CD4-positive, alpha-beta memory T cell (primary cell): ENCODE measurements at regions of chr12 and their contacts with region 1.

Region 1: GRCh38 chr12:92363295-92364146 is 217.9 kb upstream of the BTG1 start:
- DNase-seq: peak; percentile 40 to 76 (median 49)
- H3K4me3 ChIP-seq: peak overlapping the region; percentile 14 to 34
- H3K4me3 Mint-ChIP-seq: peak overlapping the region; percentile 44 to 92 (median 78)
- H3K27ac ChIP-seq: peak overlapping the region; percentile 41
- H3K27ac Mint-ChIP-seq: peak overlapping the region; percentile 85 to 97 (median 94)
- H3K4me1 ChIP-seq: peaks cover 66% of the 10 kb centered on the region
- H3K4me1 Mint-ChIP-seq: peaks cover 42 to 75% (median 60%) of the 10 kb centered on the region in 4 donors
- H3K27me3 ChIP-seq: no peaks in the 10 kb centered on the region
- H3K27me3 Mint-ChIP-seq: no peaks in the 10 kb centered on the region

Region 2: DNA sequence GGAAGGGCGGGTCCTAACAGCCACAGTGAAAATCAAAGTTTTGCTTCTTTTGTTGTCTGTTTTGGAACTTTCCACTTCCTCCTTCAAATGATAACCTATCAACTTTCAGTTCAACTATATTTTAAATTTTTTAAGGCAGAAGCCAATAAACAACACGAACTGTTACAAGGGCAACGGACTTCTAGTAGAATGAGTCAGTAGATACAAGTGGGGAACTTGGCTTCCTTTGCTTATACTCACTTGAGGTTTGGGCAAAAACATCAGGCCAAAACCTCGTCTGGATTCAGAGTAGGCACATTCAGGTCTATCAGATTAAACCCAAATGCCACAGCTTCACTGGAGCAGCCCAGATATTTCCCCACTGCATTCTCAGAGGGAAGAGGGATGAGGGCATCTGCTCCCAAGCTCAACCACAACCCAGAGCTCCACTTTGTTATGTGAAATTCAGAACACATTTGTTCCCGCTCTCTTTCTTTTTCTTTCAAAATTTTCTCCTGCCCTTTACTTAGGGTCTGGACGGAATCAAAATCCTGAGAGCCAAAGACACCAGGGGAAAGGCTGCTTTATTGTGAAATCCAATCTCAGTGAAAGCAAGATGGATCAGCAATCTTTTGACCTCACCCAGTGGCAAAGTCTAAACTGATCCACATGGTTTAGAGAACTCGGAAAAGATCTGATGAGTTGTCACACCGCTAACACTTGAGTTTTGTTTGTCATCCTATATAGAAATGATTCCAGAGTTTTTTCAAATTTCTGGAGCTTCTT is 65.4 kb before region 1 on chr12:
- CTCF ChIA-PET with region 1: no interaction called
- POLR2A ChIA-PET with region 1: interaction called, 3 read pairs
- intact Hi-C with region 1: loop called (anchors 5 kb)
- DNase-seq: peak in 4 of 5 donors; percentile 33 to 49 (median 46)
- H3K4me3 ChIP-seq: no peak overlapping the region
- H3K4me3 Mint-ChIP-seq: peak overlapping the region; percentile 28 to 78 (median 72)
- H3K27ac ChIP-seq: no peak overlapping the region
- H3K27ac Mint-ChIP-seq: peak overlapping the region in 5 of 7 donors; percentile 76 to 93 (median 93)
- H3K4me1 ChIP-seq: peaks cover 40% of the 10 kb centered on the region
- H3K4me1 Mint-ChIP-seq: peaks cover 21 to 33% (median 28%) of the 10 kb centered on the region in 4 donors
- H3K27me3 ChIP-seq: no peaks in the 10 kb centered on the region
- H3K27me3 Mint-ChIP-seq: no peaks in the 10 kb centered on the region

Region 3: GRCh38 chr12:92324849-92325500 is 38.5 kb before region 1 on chr12:
- CTCF ChIA-PET with region 1: no interaction called
- POLR2A ChIA-PET with region 1: no interaction called
- intact Hi-C with region 1: loop called (anchors 5 kb)
- DNase-seq: peak in 1 of 5 donors; percentile 16
- H3K4me3 ChIP-seq: no peak overlapping the region
- H3K4me3 Mint-ChIP-seq: peak overlapping the region in 3 of 8 donors; percentile 11 to 28 (median 17)
- H3K27ac ChIP-seq: no peak overlapping the region
- H3K27ac Mint-ChIP-seq: peak overlapping the region in 4 of 7 donors; percentile 54 to 81 (median 64)
- H3K4me1 ChIP-seq: peaks cover 8% of the 10 kb centered on the region
- H3K4me1 Mint-ChIP-seq: peaks cover 19 to 57% (median 39%) of the 10 kb centered on the region in 4 donors
- H3K27me3 ChIP-seq: no peaks in the 10 kb centered on the region
- H3K27me3 Mint-ChIP-seq: no peaks in the 10 kb centered on the region

Region 4: DNA sequence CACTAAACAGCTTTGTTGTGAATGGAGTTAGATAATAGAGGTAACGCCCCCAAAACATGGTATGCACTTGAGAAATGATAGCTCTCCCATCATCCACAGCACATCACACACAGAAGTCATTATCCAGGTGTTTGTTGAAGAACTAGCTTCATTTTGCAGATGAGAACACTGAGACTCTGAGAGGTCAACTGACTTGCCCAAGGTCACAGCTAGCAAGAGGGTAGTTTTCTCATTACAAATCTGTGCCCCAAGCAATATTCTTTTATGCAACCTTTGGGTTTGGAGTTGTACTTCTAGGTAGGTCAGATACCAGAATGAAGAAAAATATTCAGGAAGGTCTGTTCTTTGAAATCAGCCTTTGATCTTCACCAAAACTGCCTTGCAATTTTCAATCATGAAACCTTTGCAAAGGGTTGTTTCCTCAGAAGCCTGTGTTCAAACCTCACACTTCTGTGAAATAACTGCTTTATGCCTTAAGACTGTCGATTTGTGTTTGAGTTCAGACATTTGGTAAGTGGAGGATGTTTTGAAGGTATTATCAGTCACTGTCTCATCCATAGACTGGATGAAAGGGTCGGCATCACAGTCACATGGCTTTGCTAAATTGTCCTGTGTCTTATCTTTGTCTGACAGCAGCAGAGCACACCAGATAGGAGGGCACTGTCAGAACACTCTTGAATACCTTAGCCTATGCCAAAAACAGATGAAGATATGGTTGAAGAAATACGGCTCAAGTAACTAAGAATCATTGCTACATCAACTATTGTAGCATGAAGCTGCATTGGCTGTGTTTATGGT is 15.4 kb after region 1 on chr12:
- CTCF ChIA-PET with region 1: interaction called, 3 read pairs
- POLR2A ChIA-PET with region 1: interaction called, 3 read pairs
- intact Hi-C with region 1: loop called (anchors 2 kb)
- DNase-seq: peak in 3 of 5 donors; percentile 16 to 41 (median 26)
- H3K4me3 ChIP-seq: no peak overlapping the region
- H3K4me3 Mint-ChIP-seq: peak overlapping the region in 7 of 8 donors; percentile 6 to 81 (median 36)
- H3K27ac ChIP-seq: peak overlapping the region; percentile 30
- H3K27ac Mint-ChIP-seq: peak overlapping the region; percentile 41 to 94 (median 88)
- H3K4me1 ChIP-seq: peaks cover 40% of the 10 kb centered on the region
- H3K4me1 Mint-ChIP-seq: peaks cover 28 to 50% (median 31%) of the 10 kb centered on the region in 4 donors
- H3K27me3 ChIP-seq: no peaks in the 10 kb centered on the region
- H3K27me3 Mint-ChIP-seq: no peaks in the 10 kb centered on the region